Endothelial cell of umbilical vein (primary cell): ENCODE measurements at regions of chr1 and their contacts with region 1.

Region 1: DNA sequence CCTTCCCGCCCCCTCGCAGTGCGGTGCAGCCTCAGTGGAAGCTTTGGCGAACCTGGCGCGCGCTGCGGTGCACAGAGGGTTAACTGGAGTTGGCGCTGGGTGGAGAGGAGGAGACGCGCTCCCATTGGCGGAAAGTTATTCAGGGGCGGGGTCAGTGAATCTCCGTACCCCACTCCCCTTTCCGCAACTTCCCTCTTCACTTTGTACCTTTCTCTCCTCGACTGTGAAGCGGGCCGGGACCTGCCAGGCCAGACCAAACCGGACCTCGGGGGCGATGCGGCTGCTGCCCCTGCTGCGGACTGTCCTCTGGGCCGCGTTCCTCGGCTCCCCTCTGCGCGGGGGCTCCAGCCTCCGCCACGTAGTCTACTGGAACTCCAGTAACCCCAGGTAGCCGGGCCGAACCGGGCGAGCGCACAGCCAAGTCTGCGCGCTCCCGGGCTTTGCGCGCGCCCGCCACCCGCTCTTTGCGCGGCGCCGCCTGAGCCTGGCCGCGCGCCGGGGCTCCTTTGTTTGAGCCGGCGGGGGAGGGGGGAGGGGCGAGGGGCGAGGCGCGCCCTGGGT is at the start of gene EFNA4:
- DNase-seq: peak; percentile 89
- H3K4me3 ChIP-seq: peak within 1 kb of the TSS; percentile 66 to 98 (median 85)
- H3K27ac ChIP-seq: peak within 1 kb of the TSS; percentile 36
- H3K4me1 ChIP-seq: peaks cover 10% of the 10 kb centered on the region
- H3K27me3 ChIP-seq: no peaks in the 10 kb centered on the region
- CTCF ChIP-seq: no peak
- POLR2A ChIP-seq: peak; percentile 89
- total RNA-seq, gene EFNA4: 16.5 and 17.5 TPM in 2 replicates

Region 2: DNA sequence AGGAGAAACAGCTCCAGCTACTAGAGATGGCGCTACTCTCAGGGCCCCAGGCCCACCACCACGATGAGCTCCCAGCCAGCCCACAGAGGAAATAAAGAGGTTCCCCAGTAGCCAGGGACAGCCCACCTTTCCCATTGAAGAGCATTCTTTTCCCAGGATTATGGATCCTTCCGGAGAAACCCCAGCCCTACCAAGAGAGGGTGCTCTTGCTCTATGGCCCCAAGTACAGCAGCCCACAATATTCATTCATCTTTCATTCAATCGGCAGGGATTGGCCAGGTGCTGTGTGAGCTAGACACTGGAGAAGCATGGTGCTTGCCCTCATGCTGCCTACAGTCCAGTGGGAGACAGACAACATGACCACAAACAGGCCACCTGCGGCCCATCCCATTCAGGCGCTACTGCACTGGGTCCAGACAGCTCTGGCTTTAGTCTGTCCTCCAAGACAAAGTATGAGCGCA is 157.0 kb before region 1 on chr1:
- CTCF ChIA-PET with region 1: interaction called, 4 read pairs
- POLR2A ChIA-PET with region 1: no interaction called
- dilution Hi-C with region 1: no loop called
- intact Hi-C with region 1: loop called (anchors 1 kb)
- DNase-seq: no peak
- H3K4me3 ChIP-seq: no peak overlapping the region
- H3K27ac ChIP-seq: no peak overlapping the region
- H3K4me1 ChIP-seq: no peaks in the 10 kb centered on the region
- H3K27me3 ChIP-seq: peaks cover 0 to 10% of the 10 kb centered on the region in 2 experiments
- CTCF ChIP-seq: peak; percentile 17 to 42
- POLR2A ChIP-seq: no peak

Region 3: GRCh38 chr1:154936555-154937084 is 127.0 kb before region 1 on chr1 and contains the start of gene PMVK:
- CTCF ChIA-PET with region 1: interaction called, 3 read pairs
- POLR2A ChIA-PET with region 1: no interaction called
- dilution Hi-C with region 1: no loop called
- intact Hi-C with region 1: loop called (anchors 1 kb)
- DNase-seq: peak; percentile 94
- H3K4me3 ChIP-seq: peak within 1 kb of the TSS; percentile 26 to 79 (median 55)
- H3K27ac ChIP-seq: peak within 1 kb of the TSS; percentile 92
- H3K4me1 ChIP-seq: peaks cover 8% of the 10 kb centered on the region
- H3K27me3 ChIP-seq: no peaks in the 10 kb centered on the region
- CTCF ChIP-seq: peak in 1 of 2 donors; percentile 36
- POLR2A ChIP-seq: peak; percentile 73
- total RNA-seq, gene PMVK: 22.6 and 23.0 TPM in 2 replicates

Region 4: GRCh38 chr1:155026593-155026992 is 37.0 kb before region 1 on chr1:
- CTCF ChIA-PET with region 1: no interaction called
- POLR2A ChIA-PET with region 1: no interaction called
- dilution Hi-C with region 1: no loop called
- intact Hi-C with region 1: no loop called
- DNase-seq: no peak
- H3K4me3 ChIP-seq: no peak overlapping the region
- H3K27ac ChIP-seq: no peak overlapping the region
- H3K4me1 ChIP-seq: no peaks in the 10 kb centered on the region
- H3K27me3 ChIP-seq: no peaks in the 10 kb centered on the region
- CTCF ChIP-seq: no peak
- POLR2A ChIP-seq: no peak

Region 5: DNA sequence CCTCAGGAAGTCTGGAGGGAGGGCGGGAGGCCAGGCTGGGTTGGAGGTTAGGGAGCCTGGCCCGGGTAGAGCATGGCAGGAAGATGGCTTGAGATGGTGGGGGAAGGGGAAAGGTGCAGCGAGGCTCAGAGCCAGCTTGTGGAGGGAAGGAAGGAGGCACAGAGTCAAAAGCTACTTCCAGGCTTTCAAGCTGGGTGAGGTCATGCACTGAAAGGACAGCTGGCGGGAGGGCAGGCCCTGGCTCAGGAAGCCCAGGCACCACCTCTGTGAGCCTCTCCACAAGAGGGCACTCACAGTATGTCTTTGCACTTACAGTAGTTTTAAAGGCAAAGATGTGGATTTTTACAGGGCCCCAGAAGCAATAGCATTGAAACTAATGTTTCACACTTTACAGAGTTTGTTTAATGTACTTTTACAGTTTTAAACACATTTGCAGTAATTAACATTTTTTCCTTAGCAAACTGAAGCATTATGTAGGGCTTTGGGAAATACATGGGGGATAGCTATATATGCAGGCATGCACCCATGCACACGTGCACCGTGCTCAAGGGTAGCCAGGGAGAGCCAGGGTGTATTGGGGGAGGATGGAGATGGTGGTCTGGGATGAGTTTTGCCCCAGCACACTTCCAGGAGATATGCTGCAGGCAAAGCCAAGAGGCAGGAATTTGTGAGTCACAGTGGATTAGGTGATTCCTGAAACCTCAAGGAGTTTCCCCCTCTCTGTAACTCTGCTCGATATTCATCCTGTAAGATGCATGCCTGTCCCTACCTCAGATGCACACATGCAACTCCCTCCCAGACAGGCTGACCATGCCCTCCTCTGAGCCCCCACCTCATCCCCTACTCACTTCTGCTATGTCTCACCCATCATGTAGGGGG is 18.6 kb before region 1 on chr1:
- CTCF ChIA-PET with region 1: interaction called, 67 read pairs
- POLR2A ChIA-PET with region 1: no interaction called
- dilution Hi-C with region 1: no loop called
- intact Hi-C with region 1: loop called (anchors 1 kb)
- DNase-seq: peak; percentile 79
- H3K4me3 ChIP-seq: no peak overlapping the region
- H3K27ac ChIP-seq: no peak overlapping the region
- H3K4me1 ChIP-seq: peaks cover 18% of the 10 kb centered on the region
- H3K27me3 ChIP-seq: no peaks in the 10 kb centered on the region
- CTCF ChIP-seq: peak; percentile 79 to 89
- POLR2A ChIP-seq: no peak

Region 6: GRCh38 chr1:155105604-155106022 is 42.0 kb after region 1 on chr1:
- CTCF ChIA-PET with region 1: no interaction called
- POLR2A ChIA-PET with region 1: no interaction called
- dilution Hi-C with region 1: no loop called
- intact Hi-C with region 1: no loop called
- DNase-seq: peak; percentile 88
- H3K4me3 ChIP-seq: no peak overlapping the region
- H3K27ac ChIP-seq: no peak overlapping the region
- H3K4me1 ChIP-seq: peaks cover 3% of the 10 kb centered on the region
- H3K27me3 ChIP-seq: peaks cover 6 to 9% of the 10 kb centered on the region in 2 experiments
- CTCF ChIP-seq: no peak
- POLR2A ChIP-seq: no peak

Region 7: DNA sequence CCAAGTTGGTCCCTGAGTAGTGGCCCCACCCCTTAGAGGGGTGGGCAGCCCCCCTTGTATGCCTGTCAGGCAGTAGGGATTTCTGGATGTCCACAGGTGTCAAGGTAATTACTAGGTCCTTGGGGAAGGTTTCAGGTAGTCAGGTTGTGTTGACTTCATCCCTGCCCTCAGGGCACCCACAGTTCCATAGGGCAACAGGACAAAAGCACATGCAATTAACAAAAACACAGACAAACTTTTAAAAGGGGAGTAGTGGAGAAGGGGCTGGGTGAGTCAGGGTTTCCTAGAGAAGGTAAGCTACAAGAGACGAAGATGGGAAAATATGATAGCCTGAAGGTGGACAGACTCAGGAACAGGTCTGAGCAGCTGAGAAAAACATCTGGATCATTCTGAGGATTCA is 95.3 kb after region 1 on chr1:
- CTCF ChIA-PET with region 1: no interaction called
- POLR2A ChIA-PET with region 1: no interaction called
- dilution Hi-C with region 1: no loop called
- intact Hi-C with region 1: no loop called
- DNase-seq: no peak
- H3K4me3 ChIP-seq: no peak overlapping the region
- H3K27ac ChIP-seq: no peak overlapping the region
- H3K4me1 ChIP-seq: no peaks in the 10 kb centered on the region
- H3K27me3 ChIP-seq: no peaks in the 10 kb centered on the region
- CTCF ChIP-seq: no peak
- POLR2A ChIP-seq: no peak

Region 8: DNA sequence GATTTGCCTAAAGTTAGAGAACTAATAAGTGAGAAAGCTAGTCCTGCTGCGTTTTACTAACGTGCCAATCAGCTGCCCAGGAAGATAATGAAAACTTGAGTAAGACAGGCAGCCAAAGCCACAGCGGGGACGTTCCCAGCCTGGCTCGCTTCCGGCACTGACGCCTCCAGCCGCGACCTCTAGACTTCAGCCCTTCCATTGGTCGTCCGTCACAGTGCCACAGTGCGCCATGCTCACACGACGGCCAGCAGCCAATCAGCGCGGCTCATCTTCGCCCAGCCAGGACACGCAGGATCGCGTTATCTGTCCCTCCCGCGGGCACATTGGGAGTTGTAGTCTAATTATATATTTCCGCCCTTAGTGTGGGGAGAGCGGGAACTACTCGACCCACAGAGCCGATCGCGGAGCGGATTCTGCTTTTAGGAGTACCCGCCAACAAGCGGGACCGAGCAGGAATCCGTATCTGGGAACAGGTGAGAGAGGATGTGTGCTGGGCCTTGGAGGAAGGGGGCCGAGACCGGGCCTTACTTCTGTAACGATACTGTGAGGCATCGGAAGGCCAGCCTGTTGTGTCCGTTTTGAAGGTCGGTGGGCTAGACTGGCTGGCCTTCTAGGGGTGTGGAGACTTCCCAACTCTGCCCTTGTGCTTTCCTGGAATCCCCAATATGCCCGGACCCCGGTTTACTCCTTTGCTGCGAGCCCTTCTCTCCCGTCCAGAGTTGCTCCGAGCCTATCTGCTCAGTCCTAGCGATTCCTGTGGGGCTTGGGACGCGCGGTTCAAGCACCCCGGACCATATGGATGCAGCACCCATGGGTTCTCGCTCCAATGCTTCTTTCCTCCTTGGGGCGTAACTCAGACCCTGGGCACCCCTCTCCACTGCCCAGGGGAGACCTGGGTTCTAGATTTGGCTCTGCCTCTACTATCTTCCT is 245.1 kb after region 1 on chr1 and contains the start of gene FDPS:
- CTCF ChIA-PET with region 1: no interaction called
- POLR2A ChIA-PET with region 1: no interaction called
- dilution Hi-C with region 1: no loop called
- intact Hi-C with region 1: no loop called
- DNase-seq: peak; percentile 99
- H3K4me3 ChIP-seq: peak within 1 kb of the TSS; percentile 47 to 86 (median 84)
- H3K27ac ChIP-seq: peak within 1 kb of the TSS; percentile 88
- H3K4me1 ChIP-seq: peaks cover 24% of the 10 kb centered on the region
- H3K27me3 ChIP-seq: no peaks in the 10 kb centered on the region
- CTCF ChIP-seq: no peak
- POLR2A ChIP-seq: peak; percentile 87
- total RNA-seq, gene FDPS: 630 and 670 TPM in 2 replicates